H1 (cell line): ENCODE measurements at regions of chr4 and their contacts with region 1.

Region 1: DNA sequence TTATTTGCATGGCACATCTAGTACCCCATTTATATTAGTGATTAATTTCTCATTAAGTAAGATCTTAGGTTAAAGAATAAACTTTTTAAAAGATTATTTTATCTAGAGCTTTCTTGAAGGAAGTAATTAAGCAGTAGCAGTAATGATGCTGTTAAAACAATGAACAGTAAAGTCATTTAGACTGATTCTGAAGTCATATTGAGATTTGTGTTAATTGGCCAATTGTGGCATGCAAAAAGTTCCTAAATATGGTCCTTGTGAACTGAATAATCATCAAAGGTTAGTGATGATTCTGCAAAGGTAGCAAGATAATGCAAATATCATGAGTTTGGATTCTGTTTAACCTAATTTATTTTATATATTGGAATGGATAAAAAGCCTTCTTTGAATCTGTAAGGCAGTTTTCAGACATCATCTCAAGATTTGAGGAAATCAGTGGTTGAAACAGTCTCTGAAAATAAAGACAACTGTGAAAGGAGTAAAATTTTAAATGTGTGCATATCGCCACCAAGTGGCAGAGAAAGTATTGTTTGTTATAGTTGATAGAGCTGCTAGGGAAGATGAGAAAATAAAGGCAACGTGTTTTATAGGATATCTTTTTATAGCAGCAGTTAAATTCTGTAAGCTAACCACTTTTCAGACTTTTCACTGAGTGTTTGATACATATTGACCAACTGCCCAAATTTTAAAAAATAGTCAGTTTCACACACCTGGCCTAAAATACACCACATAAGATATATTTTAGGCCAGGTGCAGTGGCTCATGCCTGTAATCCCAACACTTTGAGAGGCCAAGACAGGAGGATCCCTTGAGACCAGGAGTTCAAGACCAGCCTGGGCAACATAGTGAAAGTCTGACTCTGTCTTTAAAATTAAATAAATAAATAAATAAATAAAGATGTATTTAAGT is 79.6 kb downstream of the CCKAR start:
- DNase-seq: no peak
- H3K4me3 ChIP-seq: no peak overlapping the region
- H3K27ac ChIP-seq: no peak overlapping the region
- H3K4me1 ChIP-seq: peaks cover 0 to 8% (median 3%) of the 10 kb centered on the region in 4 experiments; a peak in 4 of 7 replicates
- H3K27me3 ChIP-seq: no peaks in the 10 kb centered on the region
- CTCF ChIP-seq: peak in 2 of 3 experiments; percentile 35 to 55; a peak in 2 of 4 replicates
- EP300 ChIP-seq: no peak
- POLR2A ChIP-seq: no peak
- RAD21 ChIP-seq: peak; percentile 70 to 71

Region 2: GRCh38 chr4:26420913-26421312 is 10.3 kb after region 1 on chr4:
- CTCF ChIA-PET with region 1: interaction called, 10 read pairs
- POLR2A ChIA-PET with region 1: interaction called, 3 read pairs
- DNase-seq: no peak
- H3K4me3 ChIP-seq: peak overlapping the region in 1 of 4 experiments; percentile 7; a peak in 1 of 8 replicates
- H3K27ac ChIP-seq: no peak overlapping the region
- H3K4me1 ChIP-seq: peaks cover 0 to 25% (median 6%) of the 10 kb centered on the region in 4 experiments; a peak in 4 of 7 replicates
- H3K27me3 ChIP-seq: no peaks in the 10 kb centered on the region
- CTCF ChIP-seq: no peak
- EP300 ChIP-seq: no peak
- POLR2A ChIP-seq: no peak
- RAD21 ChIP-seq: no peak

Region 3: GRCh38 chr4:26484032-26484515 is 73.4 kb after region 1 on chr4:
- CTCF ChIA-PET with region 1: no interaction called
- POLR2A ChIA-PET with region 1: no interaction called
- DNase-seq: no peak
- H3K4me3 ChIP-seq: no peak overlapping the region
- H3K27ac ChIP-seq: no peak overlapping the region
- H3K4me1 ChIP-seq: no peaks in the 10 kb centered on the region; a peak in 2 of 7 replicates
- H3K27me3 ChIP-seq: no peaks in the 10 kb centered on the region
- CTCF ChIP-seq: no peak
- EP300 ChIP-seq: no peak
- POLR2A ChIP-seq: no peak
- RAD21 ChIP-seq: no peak